CD14-positive monocyte (primary cell): ENCODE measurements at regions of chr9 and their contacts with region 1.

Region 1: DNA sequence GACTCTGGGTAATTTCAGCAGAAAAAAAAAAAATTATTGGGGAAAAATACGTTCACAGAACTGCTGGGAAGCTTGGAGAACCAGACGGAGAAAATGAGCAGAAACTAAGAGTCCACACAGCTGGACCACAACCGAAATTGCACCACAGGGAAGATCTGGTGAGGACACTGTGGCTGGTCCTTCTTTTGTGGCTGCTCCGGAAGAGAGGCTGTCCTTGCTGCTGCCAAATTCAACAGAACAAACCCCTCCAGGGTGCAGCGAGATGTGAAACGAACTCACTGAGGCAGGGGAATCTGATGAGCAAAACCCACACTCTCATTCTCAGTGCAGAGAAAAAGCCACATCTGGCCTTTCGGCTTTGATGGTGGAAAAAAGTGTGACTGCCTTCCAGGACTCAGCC is 200.0 kb downstream of the ACTL7B start:
- DNase-seq: no peak
- H3K4me3 ChIP-seq: no peak overlapping the region
- H3K4me3 Mint-ChIP-seq: no peak overlapping the region
- H3K27ac ChIP-seq: no peak overlapping the region
- H3K27ac Mint-ChIP-seq: no peak overlapping the region
- H3K4me1 ChIP-seq: peaks cover 5 to 23% of the 10 kb centered on the region in 2 donors
- H3K4me1 Mint-ChIP-seq: peaks cover 27% of the 10 kb centered on the region
- H3K27me3 ChIP-seq: no peaks in the 10 kb centered on the region
- H3K27me3 Mint-ChIP-seq: no peaks in the 10 kb centered on the region
- CTCF ChIP-seq: no peak

Region 2: GRCh38 chr9:108609227-108609896 is 46.5 kb before region 1 on chr9:
- intact Hi-C with region 1: loop called in 1 of 2 experiments (anchors 5 kb)
- DNase-seq: no peak
- H3K4me3 ChIP-seq: no peak overlapping the region
- H3K4me3 Mint-ChIP-seq: no peak overlapping the region
- H3K27ac ChIP-seq: no peak overlapping the region
- H3K27ac Mint-ChIP-seq: no peak overlapping the region
- H3K4me1 ChIP-seq: no peaks in the 10 kb centered on the region
- H3K4me1 Mint-ChIP-seq: peaks cover 6% of the 10 kb centered on the region
- H3K27me3 ChIP-seq: no peaks in the 10 kb centered on the region
- H3K27me3 Mint-ChIP-seq: peaks cover 0 to 2% (median 1%) of the 10 kb centered on the region in 3 donors
- CTCF ChIP-seq: no peak

Region 3: GRCh38 chr9:109150925-109151545 is 495.2 kb after region 1 on chr9:
- intact Hi-C with region 1: no loop called
- DNase-seq: no peak
- H3K4me3 ChIP-seq: no peak overlapping the region
- H3K4me3 Mint-ChIP-seq: no peak overlapping the region
- H3K27ac ChIP-seq: no peak overlapping the region
- H3K27ac Mint-ChIP-seq: no peak overlapping the region
- H3K4me1 ChIP-seq: no peaks in the 10 kb centered on the region
- H3K4me1 Mint-ChIP-seq: no peaks in the 10 kb centered on the region
- H3K27me3 ChIP-seq: no peaks in the 10 kb centered on the region
- H3K27me3 Mint-ChIP-seq: peaks cover 2 to 17% (median 5%) of the 10 kb centered on the region in 3 donors
- CTCF ChIP-seq: no peak